Psoas muscle (tissue), 8 donors: ENCODE measurements at regions of chr1 and their contacts with region 1.

Region 1: DNA sequence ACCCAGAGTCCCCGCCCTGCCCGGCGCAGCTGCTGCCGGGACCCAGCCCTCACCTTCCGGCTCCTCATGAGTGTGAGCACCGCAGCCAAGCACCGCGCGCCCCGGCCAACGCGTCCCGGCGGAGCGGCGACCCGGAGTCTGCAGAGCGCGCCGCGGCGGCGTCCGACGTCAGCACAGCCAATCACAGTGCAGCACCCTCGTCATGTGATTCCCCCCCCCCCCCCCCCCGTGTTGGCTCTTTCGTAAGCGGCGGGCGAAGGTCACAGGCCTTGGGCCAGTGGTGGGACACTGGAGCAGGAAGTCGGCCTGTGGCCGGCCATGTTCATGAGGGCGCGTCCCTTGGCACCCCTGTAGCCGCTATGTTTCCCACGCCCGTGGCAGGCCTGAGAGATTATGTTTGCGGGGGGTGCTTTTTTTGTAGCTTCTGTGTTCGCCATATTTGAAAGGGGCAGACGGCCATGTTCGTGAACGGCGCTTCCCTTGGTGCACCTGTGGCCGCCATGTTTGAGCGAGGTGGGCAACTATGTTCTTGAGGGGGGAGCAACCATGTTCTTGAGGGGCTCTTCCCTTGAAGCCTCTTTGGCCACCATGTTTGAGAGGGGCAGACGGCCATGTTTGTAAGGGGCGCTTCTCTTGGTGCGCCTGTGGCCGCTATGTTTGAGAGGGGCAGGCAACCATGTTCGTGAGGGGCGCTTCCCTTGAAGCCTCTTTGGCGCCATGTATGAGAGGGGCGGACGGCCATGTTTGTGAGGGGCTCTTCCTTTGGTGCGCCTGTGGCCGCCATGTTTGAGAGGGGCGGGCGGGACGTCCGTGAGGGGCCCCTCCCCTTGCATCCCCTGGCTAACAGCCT is at the start of gene C1orf174:
- DNase-seq: peak; percentile 95 to 98
- ATAC-seq: peak; percentile 88 to 91 (median 90)
- H3K4me3 ChIP-seq: peak within 1 kb of the TSS; percentile 94
- H3K27ac ChIP-seq: peak within 1 kb of the TSS; percentile 98
- H3K4me1 ChIP-seq: peaks cover 6% of the 10 kb centered on the region
- H3K27me3 ChIP-seq: no peaks in the 10 kb centered on the region
- CTCF ChIP-seq: no peak
- total RNA-seq, gene C1orf174: 11.8 to 14.6 (median 14.0) TPM

Region 2: GRCh38 chr1:2586154-2587070 is 1313.9 kb before region 1 on chr1 and contains the start of gene PRXL2B:
- intact Hi-C with region 1: loop called in 1 of 2 experiments (anchors 5 kb)
- DNase-seq: peak; percentile 99 to 100
- ATAC-seq: peak; percentile 94 to 96 (median 94)
- H3K4me3 ChIP-seq: peak within 1 kb of the TSS; percentile 87
- H3K27ac ChIP-seq: peak within 1 kb of the TSS; percentile 88
- H3K4me1 ChIP-seq: peaks cover 3% of the 10 kb centered on the region
- H3K27me3 ChIP-seq: peaks cover 0 to 6% (median 2%) of the 10 kb centered on the region in 3 donors
- CTCF ChIP-seq: no peak
- total RNA-seq, gene PRXL2B: 0.97 to 3.9 (median 3.1) TPM

Region 3: DNA sequence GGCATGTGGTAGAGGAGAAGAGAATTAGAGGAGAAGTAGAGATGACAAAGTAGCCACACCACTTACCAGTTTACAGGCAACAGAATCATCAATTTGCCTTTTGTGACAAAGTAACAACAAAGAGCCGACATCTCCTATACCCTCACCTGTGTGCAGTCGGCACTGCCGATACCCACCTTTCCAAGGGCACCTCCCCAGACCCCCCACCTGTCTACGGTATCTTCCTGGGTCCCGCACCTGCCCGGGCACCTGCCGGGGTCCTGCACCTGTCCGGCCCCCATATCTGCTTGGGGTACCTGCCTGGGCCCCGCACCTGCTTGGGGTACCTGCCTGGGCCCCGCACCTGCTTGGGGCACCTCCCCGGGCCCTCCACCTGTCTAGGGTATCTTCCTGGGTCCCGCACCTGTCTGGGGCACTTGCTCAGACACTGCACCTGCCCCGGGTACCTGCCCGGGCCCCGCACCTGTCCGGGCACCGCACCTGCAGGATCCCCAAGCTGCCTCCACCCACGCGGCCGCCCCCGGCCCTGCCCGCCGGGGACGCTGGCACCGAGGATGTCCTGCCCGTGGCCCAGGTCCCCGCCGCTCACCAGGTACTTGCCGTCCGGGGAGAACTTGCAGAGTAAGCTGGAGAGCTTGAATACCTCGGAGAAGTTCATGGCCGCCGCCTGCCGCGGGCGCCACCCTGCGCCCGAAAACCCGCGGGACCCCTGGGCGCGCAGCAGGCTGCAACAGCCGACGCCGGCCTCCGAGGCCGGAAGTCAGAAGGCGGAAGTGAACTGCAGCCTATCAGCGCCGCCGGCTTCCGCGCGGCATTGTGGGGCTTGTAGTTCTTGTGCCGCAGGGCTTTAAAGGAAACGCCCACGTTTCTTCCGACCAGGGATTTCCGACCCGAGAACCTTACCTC is 250.7 kb before region 1 on chr1 and contains the start of gene WRAP73:
- intact Hi-C with region 1: loop called in 1 of 2 experiments (anchors 10 kb)
- DNase-seq: peak; percentile 91 to 94
- ATAC-seq: peak; percentile 94 to 99 (median 96)
- H3K4me3 ChIP-seq: peak within 1 kb of the TSS; percentile 100
- H3K27ac ChIP-seq: peak within 1 kb of the TSS; percentile 65
- H3K4me1 ChIP-seq: peaks cover 8% of the 10 kb centered on the region
- H3K27me3 ChIP-seq: peaks cover 0 to 44% (median 32%) of the 10 kb centered on the region in 3 donors
- CTCF ChIP-seq: peak; percentile 9
- total RNA-seq, gene WRAP73: 10.8 to 12.6 (median 11.7) TPM

Region 4: GRCh38 chr1:4176841-4177240 is 276.5 kb after region 1 on chr1:
- intact Hi-C with region 1: no loop called
- DNase-seq: no peak
- ATAC-seq: no peak
- H3K4me3 ChIP-seq: no peak overlapping the region
- H3K27ac ChIP-seq: no peak overlapping the region
- H3K4me1 ChIP-seq: no peaks in the 10 kb centered on the region
- H3K27me3 ChIP-seq: peaks cover 0 to 4% (median 0%) of the 10 kb centered on the region in 3 donors
- CTCF ChIP-seq: no peak